Dendritic cell treated with granulocyte-macrophage colony-stimulating factor and Interleukin-4, amounts not matched to agents 40 ng/mL and 50 ng/mL, for 4 days (primary cell): ENCODE measurements at regions of chr3 and their contacts with region 1.

Region 1: GRCh38 chr3:70914862-70915261 is 602.4 kb upstream of the MDFIC2 start:
- H3K4me3 Mint-ChIP-seq: no peak overlapping the region
- H3K27ac Mint-ChIP-seq: no peak overlapping the region
- H3K4me1 Mint-ChIP-seq: no peaks in the 10 kb centered on the region
- H3K27me3 Mint-ChIP-seq: no peaks in the 10 kb centered on the region

Region 2: DNA sequence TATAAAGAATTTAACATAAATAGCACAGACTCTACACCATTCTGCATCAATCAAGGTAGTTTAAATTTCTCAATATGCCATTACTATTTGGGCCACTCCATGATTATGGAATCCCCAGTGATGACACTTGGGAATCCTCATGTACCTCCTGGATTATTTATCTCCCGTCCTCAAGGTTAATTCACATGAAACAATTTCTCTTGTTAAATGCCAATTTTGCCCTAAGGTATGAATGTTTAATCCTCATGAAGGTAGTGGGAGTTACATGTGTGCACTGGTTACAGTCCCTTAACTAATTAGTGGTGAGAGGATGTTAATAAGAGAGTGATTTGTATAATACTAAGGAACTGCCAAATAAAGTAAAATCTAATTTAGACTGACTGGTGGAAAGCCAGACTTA is 230.2 kb before region 1 on chr3:
- intact Hi-C with region 1: loop called (anchors 5 kb)
- H3K4me3 Mint-ChIP-seq: no peak overlapping the region
- H3K27ac Mint-ChIP-seq: no peak overlapping the region
- H3K4me1 Mint-ChIP-seq: no peaks in the 10 kb centered on the region
- H3K27me3 Mint-ChIP-seq: no peaks in the 10 kb centered on the region

Region 3: GRCh38 chr3:71305231-71306206 is 390.7 kb after region 1 on chr3:
- intact Hi-C with region 1: no loop called
- H3K4me3 Mint-ChIP-seq: peak overlapping the region; percentile 66
- H3K27ac Mint-ChIP-seq: peak overlapping the region; percentile 60
- H3K4me1 Mint-ChIP-seq: peaks cover 29% of the 10 kb centered on the region
- H3K27me3 Mint-ChIP-seq: no peaks in the 10 kb centered on the region